Activated CD4-positive, alpha-beta T cell treated with anti-CD3 and anti-CD28 coated beads, Interleukin-2, amount 10 ng/mL, durations not matched to agents 24 days and 14 days (primary cell): ENCODE measurements at regions of chr11 and their contacts with region 1.

Region 1: GRCh38 chr11:130069684-130070108 is at the start of gene APLP2:
- DNase-seq: peak; percentile 99
- H3K4me3 Mint-ChIP-seq: peak within 1 kb of the TSS; percentile 95
- H3K27ac Mint-ChIP-seq: peak within 1 kb of the TSS; percentile 87
- H3K4me1 Mint-ChIP-seq: peaks cover 20% of the 10 kb centered on the region
- H3K27me3 Mint-ChIP-seq: peaks cover 35% of the 10 kb centered on the region
- total RNA-seq, gene APLP2: 44.9 and 46.4 TPM in 2 replicates

Region 2: GRCh38 chr11:129895126-129896041 is 174.3 kb before region 1 on chr11 and contains the start of gene NFRKB:
- intact Hi-C with region 1: loop called (anchors 2 kb)
- DNase-seq: peak; percentile 96
- H3K4me3 Mint-ChIP-seq: peak within 1 kb of the TSS; percentile 91
- H3K27ac Mint-ChIP-seq: peak within 1 kb of the TSS; percentile 89
- H3K4me1 Mint-ChIP-seq: peaks cover 27% of the 10 kb centered on the region
- H3K27me3 Mint-ChIP-seq: peaks cover 6% of the 10 kb centered on the region
- total RNA-seq, gene NFRKB: 45.5 and 52.2 TPM in 2 replicates

Region 3: GRCh38 chr11:129922674-129923073 is 147.0 kb before region 1 on chr11:
- intact Hi-C with region 1: loop called (anchors 2 kb)
- DNase-seq: no peak
- H3K4me3 Mint-ChIP-seq: no peak overlapping the region
- H3K27ac Mint-ChIP-seq: no peak overlapping the region
- H3K4me1 Mint-ChIP-seq: peaks cover 19% of the 10 kb centered on the region
- H3K27me3 Mint-ChIP-seq: no peaks in the 10 kb centered on the region

Region 4: GRCh38 chr11:130124096-130124495 is 54.4 kb after region 1 on chr11:
- intact Hi-C with region 1: loop called (anchors 5 kb)
- DNase-seq: no peak
- H3K4me3 Mint-ChIP-seq: no peak overlapping the region
- H3K27ac Mint-ChIP-seq: no peak overlapping the region
- H3K4me1 Mint-ChIP-seq: peaks cover 15% of the 10 kb centered on the region
- H3K27me3 Mint-ChIP-seq: peaks cover 13% of the 10 kb centered on the region

Region 5: GRCh38 chr11:130403271-130403804 is 333.6 kb after region 1 on chr11:
- intact Hi-C with region 1: no loop called
- DNase-seq: no peak
- H3K4me3 Mint-ChIP-seq: no peak overlapping the region
- H3K27ac Mint-ChIP-seq: no peak overlapping the region
- H3K4me1 Mint-ChIP-seq: peaks cover 19% of the 10 kb centered on the region
- H3K27me3 Mint-ChIP-seq: peaks cover 22% of the 10 kb centered on the region